ENCODE measurements at regions of chr3 and their contacts with region 1.

Region 1: GRCh38 chr3:45199837-45200648 is 26.0 kb downstream of the TMEM158 start:
- DNase-seq: peak; percentile 95
- ATAC-seq: peak; percentile 88
- H3K4me3 ChIP-seq: peak overlapping the region; percentile 4 to 40; a peak in 2 of 4 replicates
- H3K27ac ChIP-seq: peak overlapping the region; percentile 78
- H3K4me1 ChIP-seq: peaks cover 22 to 33% of the 10 kb centered on the region in 2 experiments
- H3K27me3 ChIP-seq: no peaks in the 10 kb centered on the region
- CTCF ChIP-seq: no peak
- POLR2A ChIP-seq: no peak
- RAD21 ChIP-seq: no peak; the same call in 1 of the 2 replicates

Region 2: DNA sequence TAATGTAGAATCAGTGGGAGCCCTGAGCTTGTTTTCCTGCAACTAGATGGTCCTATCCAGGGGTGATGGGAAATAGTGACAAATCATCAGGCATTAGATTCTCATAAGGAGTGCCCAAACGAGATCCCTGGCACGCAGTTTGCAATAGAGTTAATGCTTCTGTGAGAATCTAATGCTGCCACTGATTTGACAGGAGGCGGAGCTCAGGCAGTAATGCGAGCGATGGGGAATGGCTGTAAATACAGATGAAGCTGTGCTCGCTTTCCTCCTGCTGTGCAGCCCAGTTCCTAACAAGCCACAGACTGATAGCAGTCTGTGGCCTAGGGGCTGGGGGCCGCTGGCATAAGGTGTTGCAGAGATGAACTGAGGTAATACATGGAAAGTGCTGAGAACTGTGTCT is 366.6 kb before region 1 on chr3:
- CTCF ChIA-PET with region 1: no interaction called
- POLR2A ChIA-PET with region 1: no interaction called
- RAD21 ChIA-PET with region 1: no interaction called
- intact Hi-C with region 1: no loop called
- DNase-seq: no peak
- ATAC-seq: no peak
- H3K4me3 ChIP-seq: no peak overlapping the region
- H3K27ac ChIP-seq: no peak overlapping the region
- H3K4me1 ChIP-seq: no peaks in the 10 kb centered on the region
- H3K27me3 ChIP-seq: no peaks in the 10 kb centered on the region
- CTCF ChIP-seq: no peak
- POLR2A ChIP-seq: no peak
- RAD21 ChIP-seq: no peak

Region 3: DNA sequence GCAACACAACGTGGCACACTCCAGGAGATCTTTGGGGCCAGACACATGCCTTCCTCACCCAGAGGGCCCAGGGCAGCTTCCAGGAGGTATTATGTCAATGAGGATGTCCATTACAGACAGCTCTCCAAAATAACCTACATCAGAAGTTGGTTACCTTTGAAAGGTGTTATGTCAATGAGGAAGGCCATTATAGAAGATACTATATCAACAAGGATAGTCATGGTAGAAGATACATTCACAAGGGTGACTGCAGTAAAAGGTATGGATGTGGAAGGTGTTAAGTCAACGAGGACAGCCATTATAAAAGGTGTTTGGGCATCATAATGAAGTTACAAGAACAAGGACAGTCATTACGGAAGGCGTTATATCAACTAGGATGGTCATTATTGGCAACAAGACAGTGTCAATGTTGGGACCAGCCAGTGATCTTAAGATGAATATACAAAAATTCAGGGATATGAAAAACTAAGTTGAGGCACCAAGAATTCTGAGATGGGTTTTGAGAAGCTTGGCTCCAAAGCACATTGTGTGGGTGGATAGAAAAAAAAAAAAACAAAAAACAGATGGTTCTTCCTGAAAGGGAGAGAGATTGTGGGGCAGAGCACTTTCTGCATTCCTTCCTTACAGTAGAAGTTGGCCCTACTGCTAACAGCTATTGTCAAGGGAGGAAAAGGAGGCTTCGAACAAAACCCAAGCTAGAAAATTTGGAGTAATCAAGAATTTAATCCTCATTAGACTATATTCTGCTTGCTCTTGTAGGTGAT is 65.1 kb before region 1 on chr3:
- CTCF ChIA-PET with region 1: no interaction called
- POLR2A ChIA-PET with region 1: interaction called, 8 read pairs
- RAD21 ChIA-PET with region 1: no interaction called
- intact Hi-C with region 1: loop called (anchors 1 kb)
- DNase-seq: no peak
- ATAC-seq: no peak
- H3K4me3 ChIP-seq: 0 out of 4 replicates have a peak overlapping the region, but pooled peaks of 1 of the 2 experiments have one; percentile 2
- H3K27ac ChIP-seq: peak overlapping the region; percentile 92
- H3K4me1 ChIP-seq: peaks cover 89 to 100% of the 10 kb centered on the region in 2 experiments
- H3K27me3 ChIP-seq: no peaks in the 10 kb centered on the region
- CTCF ChIP-seq: no peak
- POLR2A ChIP-seq: no peak
- RAD21 ChIP-seq: no peak

Region 4: DNA sequence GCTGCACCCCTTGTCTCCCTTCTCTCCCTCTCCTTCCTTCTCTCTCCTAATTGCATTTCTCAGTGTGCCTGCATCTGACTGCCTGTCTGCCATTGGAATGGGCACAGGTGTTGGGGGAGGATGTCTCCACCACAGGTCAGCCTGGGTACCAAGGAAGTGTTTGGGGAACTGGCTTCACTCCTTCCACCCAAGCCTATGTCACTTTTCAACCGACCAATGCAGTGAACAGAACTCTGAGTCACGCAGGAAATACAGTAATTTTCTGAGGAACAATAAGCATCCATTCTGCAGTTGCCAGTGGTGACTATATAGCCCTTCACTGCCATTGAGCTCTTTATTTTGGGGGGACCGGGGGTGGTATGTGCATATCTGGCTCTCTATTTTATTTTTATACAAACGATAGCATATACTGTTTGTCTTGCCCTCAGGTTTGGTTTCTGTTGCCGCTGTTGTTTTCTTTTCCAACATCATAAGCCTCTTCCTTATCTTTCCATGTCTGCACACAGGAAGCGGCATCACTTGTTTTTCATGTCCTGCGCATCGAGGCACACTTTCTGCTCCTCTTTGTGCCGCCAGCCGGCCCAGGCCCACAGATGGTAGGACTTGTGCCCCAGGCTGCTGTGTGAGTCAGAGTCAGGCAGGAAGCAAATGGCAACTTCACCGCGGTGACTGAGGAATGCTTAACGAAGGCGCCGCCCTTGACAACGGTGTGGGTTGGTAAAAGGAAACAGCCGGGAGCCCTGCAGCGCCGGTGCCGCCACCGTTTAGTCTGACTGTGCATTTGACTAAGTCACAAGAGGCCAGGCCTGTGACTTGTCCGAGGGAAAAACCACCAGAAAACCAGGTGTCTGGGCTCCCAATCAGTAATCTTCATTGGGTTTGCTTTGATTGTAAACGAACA is 32.8 kb before region 1 on chr3:
- CTCF ChIA-PET with region 1: no interaction called
- POLR2A ChIA-PET with region 1: interaction called, 7 read pairs
- RAD21 ChIA-PET with region 1: no interaction called
- intact Hi-C with region 1: loop called (anchors 1 kb)
- DNase-seq: peak; percentile 98
- ATAC-seq: peak; percentile 95
- H3K4me3 ChIP-seq: peak overlapping the region in 1 of 2 experiments; percentile 36; a peak in 2 of 4 replicates
- H3K27ac ChIP-seq: peak overlapping the region; percentile 86
- H3K4me1 ChIP-seq: peaks cover 35 to 53% of the 10 kb centered on the region in 2 experiments
- H3K27me3 ChIP-seq: no peaks in the 10 kb centered on the region
- CTCF ChIP-seq: no peak
- POLR2A ChIP-seq: no peak
- RAD21 ChIP-seq: peak; percentile 46; the same call in 1 of the 2 replicates

Measured in HCT116 (cell line).